ENCODE measurements at regions of chr6 and their contacts with region 1.

Region 1: DNA sequence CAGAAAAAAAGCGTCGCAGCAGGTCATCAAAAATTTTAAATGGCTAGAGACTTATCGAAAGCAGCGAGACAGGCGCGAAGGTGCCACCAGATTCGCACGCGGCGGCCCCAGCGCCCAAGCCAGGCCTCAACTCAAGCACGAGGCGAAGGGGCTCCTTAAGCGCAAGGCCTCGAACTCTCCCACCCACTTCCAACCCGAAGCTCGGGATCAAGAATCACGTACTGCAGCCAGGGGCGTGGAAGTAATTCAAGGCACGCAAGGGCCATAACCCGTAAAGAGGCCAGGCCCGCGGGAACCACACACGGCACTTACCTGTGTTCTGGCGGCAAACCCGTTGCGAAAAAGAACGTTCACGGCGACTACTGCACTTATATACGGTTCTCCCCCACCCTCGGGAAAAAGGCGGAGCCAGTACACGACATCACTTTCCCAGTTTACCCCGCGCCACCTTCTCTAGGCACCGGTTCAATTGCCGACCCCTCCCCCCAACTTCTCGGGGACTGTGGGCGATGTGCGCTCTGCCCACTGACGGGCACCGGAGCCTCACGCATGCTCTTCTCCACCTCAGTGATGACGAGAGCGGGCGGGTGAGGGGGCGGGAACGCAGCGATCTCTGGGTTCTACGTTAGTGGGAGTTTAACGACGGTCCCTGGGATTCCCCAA is at the start of gene EEF1A1:
- DNase-seq: peak; percentile 91 to 100 (median 99)
- ATAC-seq: peak; percentile 90
- H3K4me3 ChIP-seq: peak within 1 kb of the TSS; percentile 98
- H3K4me3 Mint-ChIP-seq: peak within 1 kb of the TSS; percentile 89 to 99 (median 94)
- H3K27ac ChIP-seq: peak within 1 kb of the TSS; percentile 98
- H3K27ac Mint-ChIP-seq: peak within 1 kb of the TSS; percentile 94 to 99 (median 97)
- H3K4me1 ChIP-seq: peaks cover 42 to 47% of the 10 kb centered on the region in 2 donors
- H3K4me1 Mint-ChIP-seq: peaks cover 16 to 72% (median 58%) of the 10 kb centered on the region in 7 donors
- H3K27me3 ChIP-seq: no peaks in the 10 kb centered on the region
- H3K27me3 Mint-ChIP-seq: peaks cover 0 to 10% (median 0%) of the 10 kb centered on the region in 5 donors
- total RNA-seq, gene EEF1A1: 8,219 to 15,585 (median 15,428) TPM

Region 2: DNA sequence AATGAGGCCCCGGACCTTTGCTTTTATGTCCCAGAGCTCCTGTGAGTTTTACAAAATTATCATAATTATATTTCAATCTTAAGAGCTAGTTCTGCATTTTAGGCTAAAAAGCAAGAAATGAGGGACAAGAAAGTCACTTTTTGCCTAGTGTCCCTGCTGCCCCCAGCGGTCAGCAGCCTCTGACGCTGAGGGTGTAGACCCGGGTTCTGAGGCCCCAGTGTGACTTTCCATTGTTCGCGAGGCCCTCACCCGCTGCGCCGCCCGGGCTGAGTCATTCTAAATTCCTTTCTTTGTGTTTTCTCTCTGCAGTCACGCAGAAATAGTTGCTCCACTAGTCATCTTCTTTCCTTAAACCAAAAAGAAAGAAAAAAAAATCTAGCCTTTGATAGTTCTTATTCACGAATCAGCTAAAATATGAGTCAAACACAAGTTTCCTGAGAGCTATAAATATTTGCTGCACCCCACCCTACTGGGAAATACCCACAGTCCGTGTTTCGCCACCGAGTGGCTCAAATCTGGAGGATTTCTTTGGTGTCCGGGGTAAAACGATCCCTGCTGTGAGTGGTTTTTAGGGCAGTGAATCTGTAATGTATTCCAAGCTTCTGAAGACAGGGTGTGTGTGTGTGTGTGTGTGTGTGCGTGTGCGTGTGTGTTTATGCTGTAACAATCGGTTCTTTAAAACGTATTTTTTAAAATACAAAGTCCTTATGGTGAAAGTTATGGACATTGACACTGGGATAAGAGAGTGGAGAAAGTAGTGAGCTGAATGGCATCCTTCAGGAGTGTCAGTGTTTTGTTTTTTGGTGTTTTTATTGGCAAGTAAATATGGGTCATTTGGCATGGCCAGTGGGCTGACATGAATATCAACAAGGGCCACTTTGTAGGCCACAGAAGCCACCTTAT is 59.7 kb after region 1 on chr6:
- CTCF ChIA-PET with region 1: interaction called, 18 read pairs
- POLR2A ChIA-PET with region 1: interaction called, 183 read pairs
- intact Hi-C with region 1: loop called (anchors 1 kb)
- DNase-seq: peak in 8 of 9 donors; percentile 9 to 69 (median 22)
- ATAC-seq: peak; percentile 90
- H3K4me3 ChIP-seq: peak overlapping the region; percentile 20
- H3K4me3 Mint-ChIP-seq: peak overlapping the region; percentile 33 to 77 (median 73)
- H3K27ac ChIP-seq: peak overlapping the region; percentile 48
- H3K27ac Mint-ChIP-seq: peak overlapping the region; percentile 70 to 95 (median 89)
- H3K4me1 ChIP-seq: peaks cover 12 to 24% of the 10 kb centered on the region in 2 donors
- H3K4me1 Mint-ChIP-seq: peaks cover 8 to 26% (median 17%) of the 10 kb centered on the region in 7 donors
- H3K27me3 ChIP-seq: no peaks in the 10 kb centered on the region
- H3K27me3 Mint-ChIP-seq: no peaks in the 10 kb centered on the region

Region 3: DNA sequence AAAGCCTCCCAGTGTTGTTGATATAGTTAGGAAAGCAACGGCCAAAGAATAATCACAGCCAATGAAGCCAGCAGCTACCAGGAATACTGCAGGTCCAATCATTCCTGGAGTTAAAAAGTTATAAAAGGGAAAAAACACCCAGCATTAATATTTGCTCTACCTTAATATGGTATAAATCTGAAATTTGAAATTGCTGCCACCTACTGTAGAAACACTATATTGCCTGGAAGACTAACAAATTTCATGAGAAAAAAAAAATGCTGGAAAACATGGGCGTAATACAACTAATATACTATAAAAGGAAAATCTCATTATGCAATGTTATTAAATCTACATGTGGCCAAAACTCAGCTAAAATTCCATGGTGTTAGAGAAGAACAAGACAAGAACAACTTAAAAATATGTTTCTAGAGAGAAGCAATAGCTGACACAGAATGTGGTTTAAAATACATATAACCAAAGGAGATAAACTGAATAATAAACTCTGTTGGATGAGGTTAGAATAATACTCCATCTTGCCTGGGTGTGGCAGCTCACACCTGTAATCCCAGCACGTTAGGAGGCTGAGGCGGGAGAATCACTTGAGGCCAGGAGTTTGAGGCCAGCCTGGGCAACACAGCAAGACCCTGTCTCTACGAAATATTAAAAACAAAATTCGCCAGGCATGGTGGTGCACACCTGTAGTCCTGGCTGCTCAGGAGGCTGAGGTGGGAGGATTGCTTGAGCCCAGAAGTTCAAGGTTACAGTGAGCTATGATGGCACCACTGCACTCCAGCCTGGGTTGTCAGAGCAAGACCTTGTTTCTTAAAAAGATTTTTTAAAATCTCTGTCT is 89.8 kb after region 1 on chr6:
- CTCF ChIA-PET with region 1: interaction called, 105 read pairs
- POLR2A ChIA-PET with region 1: interaction called, 107 read pairs
- intact Hi-C with region 1: no loop called
- DNase-seq: peak in 7 of 9 donors; percentile 25 to 66 (median 58)
- ATAC-seq: peak; percentile 80
- H3K4me3 ChIP-seq: no peak overlapping the region
- H3K4me3 Mint-ChIP-seq: no peak overlapping the region
- H3K27ac ChIP-seq: no peak overlapping the region
- H3K27ac Mint-ChIP-seq: peak overlapping the region in 4 of 9 donors; percentile 12 to 56 (median 29)
- H3K4me1 ChIP-seq: no peaks in the 10 kb centered on the region
- H3K4me1 Mint-ChIP-seq: peaks cover 4 to 6% (median 5%) of the 10 kb centered on the region in 7 donors
- H3K27me3 ChIP-seq: no peaks in the 10 kb centered on the region
- H3K27me3 Mint-ChIP-seq: no peaks in the 10 kb centered on the region

Region 4: DNA sequence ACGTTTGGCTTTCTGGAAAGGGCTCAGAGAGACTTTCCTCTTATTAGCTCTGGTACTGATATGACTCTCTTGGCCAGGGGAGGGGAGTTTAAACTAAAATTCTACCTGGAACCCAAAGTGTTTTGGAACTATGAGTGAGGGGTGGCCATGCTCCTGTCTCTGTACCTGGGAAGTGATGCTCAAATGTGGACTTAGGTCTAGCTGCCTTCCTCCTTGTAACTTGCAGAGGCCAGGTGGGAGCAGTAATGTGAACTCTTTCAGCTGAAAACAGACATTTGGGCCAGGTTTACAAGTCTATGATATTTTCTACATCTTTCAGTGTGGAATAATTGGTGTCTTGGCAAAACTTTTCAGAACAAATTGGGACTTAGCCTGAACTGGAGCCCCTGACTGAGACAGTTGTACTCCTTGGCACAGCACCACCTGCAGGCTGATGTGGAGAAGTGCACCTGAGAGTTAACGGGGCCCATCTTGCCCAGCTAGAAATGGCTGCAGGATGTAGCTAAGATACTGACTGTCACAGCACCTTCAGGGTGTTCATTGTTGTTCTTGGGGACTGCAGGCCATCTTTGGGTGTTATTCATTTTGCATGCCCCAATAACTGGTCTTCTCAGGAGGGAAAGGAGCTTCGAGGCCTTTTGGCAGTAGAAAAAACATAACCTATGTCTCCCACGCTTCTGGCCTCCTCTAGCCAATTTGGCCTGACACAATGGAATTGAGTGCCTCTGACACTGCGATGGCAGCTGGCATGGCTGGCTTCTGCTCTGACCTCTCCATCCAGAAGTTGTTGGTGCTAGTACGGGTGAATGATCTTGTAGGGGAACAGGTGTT is 212.2 kb after region 1 on chr6:
- CTCF ChIA-PET with region 1: interaction called, 3 read pairs
- POLR2A ChIA-PET with region 1: interaction called, 4 read pairs
- intact Hi-C with region 1: loop called in 1 of 2 experiments (anchors 10 kb)
- DNase-seq: peak; percentile 34 to 80 (median 69)
- ATAC-seq: peak; percentile 98
- H3K4me3 ChIP-seq: no peak overlapping the region
- H3K4me3 Mint-ChIP-seq: no peak overlapping the region
- H3K27ac ChIP-seq: no peak overlapping the region
- H3K27ac Mint-ChIP-seq: peak overlapping the region in 3 of 9 donors; percentile 48 to 63 (median 58)
- H3K4me1 ChIP-seq: no peaks in the 10 kb centered on the region
- H3K4me1 Mint-ChIP-seq: peaks cover 0 to 21% (median 0%) of the 10 kb centered on the region in 7 donors
- H3K27me3 ChIP-seq: no peaks in the 10 kb centered on the region
- H3K27me3 Mint-ChIP-seq: peaks cover 0 to 4% (median 0%) of the 10 kb centered on the region in 5 donors